Head of caudate nucleus (tissue), 42 donors: ENCODE measurements at regions of chr15 and their contacts with region 1.

Region 1: GRCh38 chr15:74438721-74439316 is 5.1 kb upstream of the SEMA7A start:
- DNase-seq: peak; percentile 63 to 93 (median 87)

Region 2: GRCh38 chr15:74382004-74382816 is 56.6 kb before region 1 on chr15:
- intact Hi-C with region 1: loop called (anchors 2 kb)
- DNase-seq: peak; percentile 75 to 98 (median 94)